Colonic mucosa (tissue), 4 donors: ENCODE measurements at regions of chr1 and their contacts with region 1.

Region 1: DNA sequence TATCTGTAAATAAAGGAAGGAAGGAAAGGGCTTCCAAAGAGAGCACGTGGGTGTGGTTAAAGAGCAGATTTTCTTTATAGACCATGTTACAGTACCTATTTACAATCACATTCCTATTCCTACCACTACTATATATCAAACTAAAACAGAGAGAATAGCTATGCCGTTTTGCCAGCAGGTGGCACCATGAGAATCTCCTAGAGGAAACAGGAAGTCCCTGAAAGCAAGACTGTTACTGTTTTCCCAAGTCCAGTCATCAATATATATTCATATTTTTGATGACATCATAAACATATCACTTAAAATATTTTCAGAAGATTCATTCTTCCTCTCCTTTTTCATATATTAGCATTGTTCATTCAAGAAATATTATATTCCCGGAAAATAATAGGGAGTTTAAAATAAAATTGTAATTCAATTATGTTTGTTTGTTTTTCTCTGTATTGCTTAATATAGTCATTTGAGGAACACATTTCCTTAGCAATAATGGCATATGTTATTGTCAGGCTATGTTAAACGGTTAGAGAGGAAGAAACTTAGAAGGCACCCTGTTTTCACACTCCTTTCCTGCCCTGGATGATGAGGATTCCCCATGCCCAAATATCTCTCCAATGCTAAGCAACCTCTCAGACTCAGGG is 6.6 kb downstream of the CCDC190 start:
- DNase-seq: peak; percentile 69
- H3K4me3 ChIP-seq: no peak overlapping the region
- H3K27ac ChIP-seq: no peak overlapping the region
- H3K4me1 ChIP-seq: no peaks in the 10 kb centered on the region
- H3K27me3 ChIP-seq: no peaks in the 10 kb centered on the region
- CTCF ChIP-seq: peak; percentile 68

Region 2: GRCh38 chr1:162605225-162605927 is 249.0 kb before region 1 on chr1:
- intact Hi-C with region 1: no loop called
- DNase-seq: no peak
- H3K4me3 ChIP-seq: no peak overlapping the region
- H3K27ac ChIP-seq: no peak overlapping the region
- H3K4me1 ChIP-seq: no peaks in the 10 kb centered on the region
- H3K27me3 ChIP-seq: no peaks in the 10 kb centered on the region
- CTCF ChIP-seq: no peak

Region 3: GRCh38 chr1:163071405-163072255 is 217.3 kb after region 1 on chr1:
- intact Hi-C with region 1: loop called (anchors 10 kb)
- DNase-seq: peak; percentile 41
- H3K4me3 ChIP-seq: no peak overlapping the region
- H3K27ac ChIP-seq: no peak overlapping the region
- H3K4me1 ChIP-seq: no peaks in the 10 kb centered on the region
- H3K27me3 ChIP-seq: no peaks in the 10 kb centered on the region
- CTCF ChIP-seq: peak; percentile 39